ENCODE measurements at regions of chr13 and their contacts with region 1.

Region 1: GRCh38 chr13:27424246-27425157 is at the start of gene GTF3A:
- DNase-seq: peak; percentile 81 to 94 (median 90)
- ATAC-seq: peak; percentile 54 to 63
- H3K4me3 Mint-ChIP-seq: peak within 1 kb of the TSS; percentile 89 to 98 (median 93)
- H3K27ac Mint-ChIP-seq: peak within 1 kb of the TSS; percentile 89 to 99 (median 96)
- H3K4me1 Mint-ChIP-seq: peaks cover 31 to 47% (median 40%) of the 10 kb centered on the region in 4 donors
- H3K27me3 Mint-ChIP-seq: no peaks in the 10 kb centered on the region
- polyA plus RNA-seq, gene GTF3A: 406 to 534 (median 525) TPM

Region 2: GRCh38 chr13:27329210-27329609 is 95.3 kb before region 1 on chr13:
- POLR2A ChIA-PET with region 1: no interaction called
- DNase-seq: no peak
- ATAC-seq: no peak
- H3K4me3 Mint-ChIP-seq: no peak overlapping the region
- H3K27ac Mint-ChIP-seq: no peak overlapping the region
- H3K4me1 Mint-ChIP-seq: peaks cover 6 to 13% (median 10%) of the 10 kb centered on the region in 4 donors
- H3K27me3 Mint-ChIP-seq: peaks cover 0 to 16% (median 5%) of the 10 kb centered on the region in 5 donors

Region 3: GRCh38 chr13:27440408-27440807 is 15.9 kb after region 1 on chr13:
- POLR2A ChIA-PET with region 1: interaction called, 515 read pairs
- DNase-seq: no peak
- ATAC-seq: no peak
- H3K4me3 Mint-ChIP-seq: peak overlapping the region in 8 of 10 donors; percentile 20 to 78 (median 30)
- H3K27ac Mint-ChIP-seq: peak overlapping the region; percentile 53 to 94 (median 86)
- H3K4me1 Mint-ChIP-seq: peaks cover 33 to 57% (median 47%) of the 10 kb centered on the region in 4 donors
- H3K27me3 Mint-ChIP-seq: no peaks in the 10 kb centered on the region

Region 4: DNA sequence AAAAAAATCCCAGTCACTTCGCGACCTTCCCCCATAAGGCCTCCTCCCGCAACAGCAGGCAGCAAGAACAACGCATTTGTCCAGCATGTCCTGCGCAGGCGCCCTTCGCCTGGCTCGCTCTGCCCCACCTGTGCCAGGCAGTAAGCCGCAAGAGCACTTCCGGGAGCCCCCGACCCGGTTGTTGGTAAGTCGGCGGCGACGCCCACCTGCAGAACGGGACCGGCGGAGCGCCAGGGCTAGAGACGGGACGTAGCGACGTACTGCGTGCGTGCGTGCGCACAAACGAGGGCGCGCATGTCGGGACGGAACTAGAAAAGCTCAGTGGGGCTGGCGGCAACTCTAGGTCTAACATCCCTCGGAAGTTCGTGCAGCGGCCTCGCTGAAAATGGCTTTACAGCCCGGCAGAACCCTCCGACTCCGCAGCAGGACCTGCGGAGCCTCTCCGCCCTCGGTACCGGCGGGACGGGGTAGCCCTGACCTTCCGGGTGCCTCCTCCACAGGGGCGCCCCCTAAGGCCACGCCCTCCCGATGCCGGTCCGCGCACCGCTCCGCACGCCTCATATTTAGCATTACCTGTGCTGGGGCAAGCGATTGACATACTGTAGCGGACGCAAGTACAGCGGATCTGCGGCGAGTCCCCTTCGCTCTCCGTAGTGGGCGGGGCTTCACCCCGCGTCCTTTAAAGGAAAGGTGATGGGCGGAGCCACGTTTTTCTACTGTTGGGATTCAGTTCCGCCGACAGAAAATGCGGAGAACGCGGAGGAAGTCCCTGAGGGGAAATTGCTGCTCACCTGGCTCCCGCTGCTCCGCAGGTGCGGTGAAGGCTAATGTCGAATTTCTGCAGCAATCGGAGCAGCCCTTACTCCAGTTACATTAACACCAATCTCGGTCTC is 25.7 kb after region 1 on chr13 and contains the start of gene MTIF3:
- POLR2A ChIA-PET with region 1: interaction called, 515 read pairs
- DNase-seq: peak; percentile 91 to 99 (median 98)
- ATAC-seq: peak; percentile 80
- H3K4me3 Mint-ChIP-seq: peak within 1 kb of the TSS; percentile 86 to 98 (median 95)
- H3K27ac Mint-ChIP-seq: peak within 1 kb of the TSS; percentile 95 to 99 (median 98)
- H3K4me1 Mint-ChIP-seq: peaks cover 27 to 75% (median 60%) of the 10 kb centered on the region in 4 donors
- H3K27me3 Mint-ChIP-seq: peaks cover 0 to 2% (median 0%) of the 10 kb centered on the region in 5 donors
- polyA plus RNA-seq, gene MTIF3: 46.6 to 69.2 (median 60.8) TPM

Region 5: GRCh38 chr13:28138012-28138755 is 713.7 kb after region 1 on chr13 and contains the start of gene PAN3:
- POLR2A ChIA-PET with region 1: interaction called, 15 read pairs
- DNase-seq: peak; percentile 88 to 96 (median 92)
- ATAC-seq: peak; percentile 61 to 65
- H3K4me3 Mint-ChIP-seq: peak within 1 kb of the TSS; percentile 87 to 97 (median 95)
- H3K27ac Mint-ChIP-seq: peak within 1 kb of the TSS; percentile 94 to 99 (median 98)
- H3K4me1 Mint-ChIP-seq: peaks cover 35 to 54% (median 50%) of the 10 kb centered on the region in 4 donors
- H3K27me3 Mint-ChIP-seq: peaks cover 0 to 1% (median 0%) of the 10 kb centered on the region in 5 donors
- polyA plus RNA-seq, gene PAN3: 2.8 to 4.8 (median 3.3) TPM